SK-N-SH (cell line): ENCODE measurements at regions of chr3 and their contacts with region 1.

Region 1: DNA sequence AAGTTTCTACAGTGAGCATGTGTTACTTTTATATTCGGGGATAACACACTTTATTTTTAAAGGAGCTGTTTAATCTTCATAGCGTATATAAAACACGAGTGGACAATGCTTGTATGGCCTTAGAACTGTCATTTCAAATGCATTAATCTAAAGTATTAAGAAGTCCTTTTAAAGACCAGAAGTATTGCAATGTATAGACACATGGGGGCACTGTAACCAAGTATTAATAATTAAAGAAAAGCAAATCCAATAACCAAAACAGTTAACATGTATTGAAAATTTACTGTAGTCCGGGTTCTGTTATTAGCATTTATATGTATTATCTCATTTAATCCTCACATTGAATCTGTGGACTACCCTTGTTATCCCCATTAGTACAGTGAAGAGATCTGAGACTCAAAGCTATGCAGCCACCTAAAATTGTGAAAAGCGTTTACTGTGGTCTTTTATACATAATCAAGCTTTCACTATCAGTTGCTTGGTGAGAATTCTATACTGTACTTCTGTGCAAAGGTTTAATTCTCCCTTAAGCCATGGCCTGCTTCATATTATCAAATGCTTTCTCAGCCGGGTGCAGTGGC is 10.1 kb downstream of the ARL14 start:
- DNase-seq: peak; percentile 12
- H3K4me3 ChIP-seq: no peak overlapping the region; a peak in 1 of 4 replicates
- H3K27ac ChIP-seq: no peak overlapping the region
- H3K4me1 ChIP-seq: no peaks in the 10 kb centered on the region
- H3K27me3 ChIP-seq: no peaks in the 10 kb centered on the region
- CTCF ChIP-seq: peak; percentile 65
- EP300 ChIP-seq: no peak
- RAD21 ChIP-seq: peak; percentile 51

Region 2: GRCh38 chr3:160671231-160671630 is 15.8 kb before region 1 on chr3:
- CTCF ChIA-PET with region 1: interaction called, 12 read pairs
- POLR2A ChIA-PET with region 1: no interaction called
- DNase-seq: no peak
- H3K4me3 ChIP-seq: no peak overlapping the region
- H3K27ac ChIP-seq: no peak overlapping the region
- H3K4me1 ChIP-seq: no peaks in the 10 kb centered on the region; a peak in 1 of 4 replicates
- H3K27me3 ChIP-seq: no peaks in the 10 kb centered on the region
- CTCF ChIP-seq: no peak
- EP300 ChIP-seq: no peak
- RAD21 ChIP-seq: no peak

Region 3: GRCh38 chr3:160676547-160677303 is 10.3 kb before region 1 on chr3 and contains the start of gene ARL14:
- CTCF ChIA-PET with region 1: interaction called, 13 read pairs
- POLR2A ChIA-PET with region 1: no interaction called
- DNase-seq: no peak
- H3K4me3 ChIP-seq: no peak within 1 kb of the TSS
- H3K27ac ChIP-seq: no peak within 1 kb of the TSS
- H3K4me1 ChIP-seq: peaks cover 0 to 5% of the 10 kb centered on the region in 2 experiments; a peak in 1 of 4 replicates
- H3K27me3 ChIP-seq: no peaks in the 10 kb centered on the region
- CTCF ChIP-seq: no peak
- EP300 ChIP-seq: no peak
- RAD21 ChIP-seq: no peak
- polyA plus RNA-seq, gene ARL14: not detected in 2 replicates

Region 4: DNA sequence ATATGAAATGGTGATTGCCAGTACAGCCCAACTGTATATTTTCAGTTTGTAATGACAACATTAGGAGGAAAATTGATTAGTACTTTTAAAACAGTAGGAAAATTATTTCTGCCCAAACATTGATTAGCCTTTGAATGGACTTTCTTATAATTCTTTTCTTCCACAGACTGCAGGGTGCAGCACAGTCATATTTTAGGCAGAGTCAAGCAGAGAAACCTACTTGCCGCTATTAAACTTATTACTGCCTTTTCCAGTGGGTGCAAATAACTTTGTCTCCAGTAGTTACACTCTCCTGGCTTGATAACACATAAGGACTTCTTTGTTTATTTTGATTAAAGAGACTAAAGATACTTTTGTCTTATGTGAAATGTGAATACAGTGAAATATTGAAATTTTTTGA is 154.4 kb after region 1 on chr3:
- CTCF ChIA-PET with region 1: no interaction called
- POLR2A ChIA-PET with region 1: no interaction called
- DNase-seq: no peak
- H3K4me3 ChIP-seq: no peak overlapping the region
- H3K27ac ChIP-seq: no peak overlapping the region
- H3K4me1 ChIP-seq: no peaks in the 10 kb centered on the region
- H3K27me3 ChIP-seq: no peaks in the 10 kb centered on the region
- CTCF ChIP-seq: no peak
- EP300 ChIP-seq: no peak
- RAD21 ChIP-seq: 0 out of 2 replicates have a peak, but pooled peaks have one; percentile 5